ENCODE measurements at regions of chr22 and their contacts with region 1.

Region 1: DNA sequence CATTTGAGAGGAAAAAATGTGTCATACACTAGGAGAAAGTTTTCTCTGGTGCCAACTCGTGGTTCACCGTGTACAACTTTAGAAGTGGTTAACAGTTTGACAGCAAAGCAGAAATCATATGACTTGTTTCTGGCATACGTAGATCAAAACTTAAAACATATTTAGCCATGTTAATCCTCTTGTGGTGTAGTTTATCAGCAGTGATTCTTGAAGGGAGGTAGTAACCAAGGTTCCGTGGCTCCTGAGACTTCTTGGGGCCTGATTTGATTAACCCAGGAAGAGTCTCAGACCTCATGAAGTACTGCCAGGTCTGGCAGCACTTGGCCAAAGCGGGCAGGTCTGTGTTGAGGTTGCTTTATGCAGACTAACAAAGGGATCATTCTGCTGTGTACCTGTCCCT is 40.5 kb downstream of the SREBF2 start:
- DNase-seq: no peak
- ATAC-seq: peak; percentile 31

Region 2: GRCh38 chr22:41832553-41833368 is 40.6 kb before region 1 on chr22 and contains the start of gene SREBF2:
- intact Hi-C with region 1: loop called (anchors 5 kb)
- DNase-seq: peak; percentile 100
- ATAC-seq: peak; percentile 97
- total RNA-seq, gene SREBF2: 75.5 TPM

Region 3: GRCh38 chr22:41925655-41926460 is 52.5 kb after region 1 on chr22:
- intact Hi-C with region 1: no loop called
- DNase-seq: peak; percentile 86
- ATAC-seq: peak; percentile 64

Measured in Right ventricle myocardium inferior (tissue), 1 donor.